ENCODE measurements at regions of chr10 and their contacts with region 1.

Region 1: DNA sequence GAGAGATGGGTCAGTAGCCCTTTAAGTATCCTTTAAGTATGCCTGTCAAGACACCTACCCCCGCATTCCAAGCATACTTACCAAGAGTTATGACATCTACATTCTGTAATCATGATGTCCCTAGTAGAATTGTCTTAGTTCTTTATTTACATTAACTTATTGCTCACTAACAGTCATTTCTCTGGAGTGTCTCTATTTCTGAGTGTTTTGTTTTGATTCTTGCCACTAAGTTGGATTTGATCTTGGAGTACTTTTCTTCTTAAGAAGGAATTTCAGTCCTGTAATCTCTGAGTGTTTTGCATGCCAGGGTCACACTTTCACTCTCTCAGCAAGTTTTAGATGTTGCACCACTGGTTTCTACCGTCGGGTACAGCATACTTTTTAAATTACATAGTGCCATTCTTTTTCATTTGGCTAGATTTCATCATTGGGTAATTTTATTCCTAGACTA is 1053.9 kb downstream of the KCNMA1 start:
- DNase-seq: no peak
- ATAC-seq: no peak
- H3K4me3 ChIP-seq: no peak overlapping the region
- H3K27ac ChIP-seq: no peak overlapping the region
- H3K4me1 ChIP-seq: no peaks in the 10 kb centered on the region
- H3K27me3 ChIP-seq: no peaks in the 10 kb centered on the region

Region 2: DNA sequence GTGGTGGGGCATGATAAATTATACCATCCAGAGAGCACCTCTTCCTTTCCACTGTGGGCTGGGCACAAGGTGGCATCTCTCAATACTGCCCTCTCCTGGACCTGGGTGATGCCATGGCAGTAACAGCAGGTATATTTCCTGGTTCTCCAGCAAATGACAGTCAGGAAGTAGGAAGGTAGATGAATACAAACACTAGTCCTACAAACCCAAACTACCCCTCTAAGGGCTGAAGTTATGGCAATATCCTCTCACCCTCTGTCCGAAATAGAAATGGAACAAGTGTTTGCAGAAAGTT is 49.0 kb after region 1 on chr10:
- intact Hi-C with region 1: no loop called
- DNase-seq: no peak
- ATAC-seq: no peak
- H3K4me3 ChIP-seq: no peak overlapping the region
- H3K27ac ChIP-seq: no peak overlapping the region
- H3K4me1 ChIP-seq: no peaks in the 10 kb centered on the region
- H3K27me3 ChIP-seq: no peaks in the 10 kb centered on the region

Region 3: GRCh38 chr10:76675951-76676587 is 92.3 kb after region 1 on chr10:
- intact Hi-C with region 1: loop called in 1 of 2 experiments (anchors 10 kb)
- DNase-seq: peak; percentile 88 to 92
- ATAC-seq: peak; percentile 94
- H3K4me3 ChIP-seq: no peak overlapping the region
- H3K27ac ChIP-seq: peak overlapping the region; percentile 68 to 100
- H3K4me1 ChIP-seq: peaks cover 4 to 6% of the 10 kb centered on the region in 2 donors
- H3K27me3 ChIP-seq: no peaks in the 10 kb centered on the region

Measured in aorta (tissue), 5 donors.